ENCODE measurements at regions of chr18 and their contacts with region 1.

Region 1: GRCh38 chr18:23515911-23516546 is 12.7 kb downstream of the RMC1 start:
- DNase-seq: peak; percentile 86
- ATAC-seq: peak; percentile 98
- H3K4me3 Mint-ChIP-seq: no peak overlapping the region
- H3K27ac Mint-ChIP-seq: peak overlapping the region; percentile 60
- H3K4me1 Mint-ChIP-seq: peaks cover 9% of the 10 kb centered on the region
- H3K27me3 Mint-ChIP-seq: no peaks in the 10 kb centered on the region

Region 2: GRCh38 chr18:23479829-23480505 is 36.1 kb before region 1 on chr18:
- CTCF ChIA-PET with region 1: interaction called, 10 read pairs
- POLR2A ChIA-PET with region 1: no interaction called
- intact Hi-C with region 1: no loop called
- DNase-seq: no peak
- ATAC-seq: no peak
- H3K4me3 Mint-ChIP-seq: no peak overlapping the region
- H3K27ac Mint-ChIP-seq: no peak overlapping the region
- H3K4me1 Mint-ChIP-seq: peaks cover 2% of the 10 kb centered on the region
- H3K27me3 Mint-ChIP-seq: no peaks in the 10 kb centered on the region

Region 3: GRCh38 chr18:23684515-23685197 is 168.6 kb after region 1 on chr18:
- CTCF ChIA-PET with region 1: no interaction called
- POLR2A ChIA-PET with region 1: no interaction called
- intact Hi-C with region 1: no loop called
- DNase-seq: no peak
- ATAC-seq: no peak
- H3K4me3 Mint-ChIP-seq: no peak overlapping the region
- H3K27ac Mint-ChIP-seq: no peak overlapping the region
- H3K4me1 Mint-ChIP-seq: peaks cover 5% of the 10 kb centered on the region
- H3K27me3 Mint-ChIP-seq: peaks cover 41% of the 10 kb centered on the region

Region 4: GRCh38 chr18:23812546-23813440 is 296.8 kb after region 1 on chr18:
- CTCF ChIA-PET with region 1: interaction called, 3 read pairs
- POLR2A ChIA-PET with region 1: no interaction called
- intact Hi-C with region 1: loop called in 1 of 2 experiments (anchors 2 kb)
- DNase-seq: no peak
- ATAC-seq: no peak
- H3K4me3 Mint-ChIP-seq: no peak overlapping the region
- H3K27ac Mint-ChIP-seq: no peak overlapping the region
- H3K4me1 Mint-ChIP-seq: peaks cover 13% of the 10 kb centered on the region
- H3K27me3 Mint-ChIP-seq: peaks cover 2% of the 10 kb centered on the region